ENCODE measurements at regions of chr11 and their contacts with region 1.

Region 1: GRCh38 chr11:55793321-55793720 is 2.0 kb upstream of the OR5D14 start:
- DNase-seq: no peak
- H3K4me3 ChIP-seq: no peak overlapping the region
- H3K27ac ChIP-seq: no peak overlapping the region
- H3K4me1 ChIP-seq: no peaks in the 10 kb centered on the region
- H3K27me3 ChIP-seq: no peaks in the 10 kb centered on the region
- CTCF ChIP-seq: no peak
- EP300 ChIP-seq: no peak
- POLR2A ChIP-seq: no peak

Region 2: DNA sequence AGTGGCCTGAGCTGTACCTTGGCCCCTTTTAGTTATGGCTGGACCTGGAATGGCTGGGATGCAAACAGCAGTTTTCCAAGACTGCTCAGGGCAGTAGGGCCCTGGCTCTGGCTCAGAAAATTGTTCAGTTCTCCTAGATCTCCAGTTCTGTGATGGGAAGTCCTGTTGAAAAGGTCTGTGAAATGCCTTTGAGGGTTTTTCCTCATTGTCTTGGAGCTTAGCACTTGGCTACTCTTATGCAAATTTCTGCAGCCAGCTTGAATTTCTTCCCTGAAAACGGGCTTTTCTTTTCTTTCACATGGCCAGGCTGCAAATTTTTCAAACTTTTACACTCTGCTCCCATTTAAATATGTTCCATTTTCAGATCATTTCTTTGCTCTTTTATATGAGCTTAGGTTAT is 392.3 kb before region 1 on chr11:
- in situ Hi-C with region 1: loop called in 1 of 4 experiments (anchors 25 kb)
- intact Hi-C with region 1: no loop called
- DNase-seq: no peak
- H3K4me3 ChIP-seq: no peak overlapping the region
- H3K27ac ChIP-seq: no peak overlapping the region
- H3K4me1 ChIP-seq: no peaks in the 10 kb centered on the region
- H3K27me3 ChIP-seq: no peaks in the 10 kb centered on the region
- CTCF ChIP-seq: no peak
- EP300 ChIP-seq: no peak
- POLR2A ChIP-seq: no peak

Region 3: DNA sequence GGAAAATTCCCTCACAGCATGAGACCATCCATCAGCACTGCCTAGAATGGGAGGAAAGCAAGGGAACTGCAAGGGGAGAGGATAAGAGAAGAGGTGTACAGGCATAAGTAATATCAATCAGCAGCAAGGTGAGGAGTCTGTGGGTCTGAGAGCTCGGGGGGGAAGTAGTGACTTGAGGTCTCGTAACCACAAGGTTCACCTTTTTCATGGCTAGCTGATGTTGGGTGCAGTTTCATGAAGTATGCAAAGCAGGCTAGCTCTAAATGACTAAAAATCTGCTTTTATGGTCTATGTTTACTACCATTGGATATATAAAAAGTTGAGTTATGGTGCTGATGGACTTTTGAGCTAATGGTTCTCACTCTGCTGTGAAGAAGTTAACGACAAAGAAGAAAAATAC is 95.5 kb before region 1 on chr11:
- in situ Hi-C with region 1: loop called in 1 of 4 experiments (anchors 25 kb)
- intact Hi-C with region 1: no loop called
- DNase-seq: no peak
- H3K4me3 ChIP-seq: no peak overlapping the region
- H3K27ac ChIP-seq: no peak overlapping the region
- H3K4me1 ChIP-seq: no peaks in the 10 kb centered on the region
- H3K27me3 ChIP-seq: no peaks in the 10 kb centered on the region
- CTCF ChIP-seq: no peak
- EP300 ChIP-seq: no peak
- POLR2A ChIP-seq: no peak

Measured in transverse colon (tissue), 4 donors.